ENCODE measurements at regions of chr3 and their contacts with region 1.

Region 1: GRCh38 chr3:158790901-158791589 is 10.8 kb upstream of the MFSD1 start:
- DNase-seq: peak in 14 of 35 experiments; percentile 0 to 76 (median 14)
- ATAC-seq: peak; percentile 58 to 69 (median 64)
- H3K4me3 ChIP-seq: no peak overlapping the region
- H3K4me3 Mint-ChIP-seq: peak overlapping the region; percentile 47 to 63 (median 47)
- H3K27ac ChIP-seq: no peak overlapping the region
- H3K27ac Mint-ChIP-seq: no peak overlapping the region
- H3K4me1 ChIP-seq: no peaks in the 10 kb centered on the region
- H3K4me1 Mint-ChIP-seq: peaks cover 3 to 6% (median 3%) of the 10 kb centered on the region in 3 donors
- H3K27me3 ChIP-seq: peaks cover 0 to 3% of the 10 kb centered on the region in 2 experiments
- H3K27me3 Mint-ChIP-seq: no peaks in the 10 kb centered on the region

Region 2: DNA sequence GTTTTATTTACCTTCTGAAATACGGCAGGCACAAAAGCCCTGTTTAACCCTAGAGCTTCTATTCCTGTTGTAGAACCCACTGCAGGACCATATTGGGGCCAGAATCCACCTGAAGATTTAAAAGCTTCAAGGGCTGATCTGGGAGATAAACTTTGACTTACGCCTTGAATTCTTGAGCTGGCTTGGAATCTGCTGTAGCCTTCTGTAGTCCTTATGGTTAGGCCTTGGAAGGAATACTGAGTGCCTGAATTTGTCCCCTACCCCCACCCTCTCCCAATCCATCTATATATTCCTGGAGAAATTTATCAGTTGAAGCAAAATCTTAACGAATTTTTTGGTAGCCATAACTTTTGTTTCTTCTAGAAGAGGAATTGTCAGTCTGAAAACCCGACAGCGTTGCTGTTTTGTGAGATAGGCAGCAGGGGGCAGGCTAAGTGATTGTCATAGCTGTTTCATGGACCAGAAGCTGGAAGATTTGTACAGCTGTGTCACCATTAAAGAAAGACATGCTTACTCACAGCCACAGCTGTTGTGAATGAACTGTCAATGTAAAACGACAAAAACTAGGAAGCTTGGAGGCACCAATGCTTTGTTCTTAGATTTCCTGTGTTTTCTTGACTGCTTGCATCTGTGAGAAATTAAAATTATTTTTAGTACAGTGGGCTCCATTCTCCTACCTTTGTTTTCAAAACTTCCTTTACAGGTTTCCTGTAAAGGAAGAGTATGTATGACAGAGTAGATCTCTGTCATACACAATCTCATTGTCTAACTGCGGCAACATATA is 131.4 kb before region 1 on chr3:
- CTCF ChIA-PET with region 1: interaction called, 10 to 30 read pairs
- POLR2A ChIA-PET with region 1: no interaction called
- DNase-seq: peak in 31 of 35 experiments; percentile 6 to 64 (median 35)
- ATAC-seq: peak; percentile 54 to 69 (median 68)
- H3K4me3 ChIP-seq: no peak overlapping the region
- H3K4me3 Mint-ChIP-seq: no peak overlapping the region
- H3K27ac ChIP-seq: no peak overlapping the region
- H3K27ac Mint-ChIP-seq: peak overlapping the region in 1 of 2 donors; percentile 28
- H3K4me1 ChIP-seq: no peaks in the 10 kb centered on the region
- H3K4me1 Mint-ChIP-seq: peaks cover 0 to 7% (median 5%) of the 10 kb centered on the region in 3 donors
- H3K27me3 ChIP-seq: no peaks in the 10 kb centered on the region
- H3K27me3 Mint-ChIP-seq: no peaks in the 10 kb centered on the region

Region 3: DNA sequence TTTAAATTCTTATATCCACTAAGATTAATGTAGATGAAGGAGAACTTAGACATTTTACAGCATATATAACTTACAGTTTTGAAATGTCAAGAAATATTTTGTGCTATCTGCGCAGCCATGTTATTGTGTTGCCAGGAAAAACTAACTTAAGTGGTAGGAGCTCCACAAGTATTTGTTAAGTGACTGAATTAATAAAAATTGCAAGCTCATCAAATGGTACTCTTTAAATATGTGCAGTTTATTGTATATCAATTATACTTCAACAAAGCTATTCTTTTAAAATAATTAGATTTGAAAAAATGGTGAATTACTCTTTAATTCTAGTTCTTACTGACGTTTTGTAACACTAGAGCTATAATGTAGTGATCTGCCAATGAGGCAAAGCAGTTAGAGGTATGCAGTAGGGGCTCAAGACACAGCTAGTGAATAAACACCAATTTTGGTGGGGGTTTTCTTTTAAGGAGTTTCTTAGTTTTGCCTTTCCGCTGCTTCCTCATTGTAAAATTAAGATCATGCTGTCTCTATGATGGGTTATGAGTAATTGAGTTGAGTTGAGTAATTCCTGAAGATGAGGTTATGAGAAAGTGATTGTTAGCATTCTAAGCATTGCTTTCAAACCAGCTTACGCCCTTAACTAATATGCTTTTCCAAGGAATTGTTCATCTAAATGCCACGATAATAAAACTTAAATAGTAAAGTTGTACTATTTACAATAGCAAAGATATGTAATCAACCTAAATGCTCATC is 107.7 kb before region 1 on chr3:
- CTCF ChIA-PET with region 1: interaction called in 1 of 2 experiments, 12 read pairs
- POLR2A ChIA-PET with region 1: no interaction called
- DNase-seq: no peak
- ATAC-seq: no peak
- H3K4me3 ChIP-seq: no peak overlapping the region
- H3K4me3 Mint-ChIP-seq: no peak overlapping the region
- H3K27ac ChIP-seq: no peak overlapping the region
- H3K27ac Mint-ChIP-seq: no peak overlapping the region
- H3K4me1 ChIP-seq: no peaks in the 10 kb centered on the region
- H3K4me1 Mint-ChIP-seq: no peaks in the 10 kb centered on the region
- H3K27me3 ChIP-seq: no peaks in the 10 kb centered on the region
- H3K27me3 Mint-ChIP-seq: no peaks in the 10 kb centered on the region

Region 4: GRCh38 chr3:158727206-158728060 is 63.6 kb before region 1 on chr3:
- CTCF ChIA-PET with region 1: interaction called, 5 to 47 read pairs
- POLR2A ChIA-PET with region 1: no interaction called
- DNase-seq: peak in 30 of 35 experiments; percentile 10 to 76 (median 34)
- ATAC-seq: peak; percentile 63 to 73 (median 70)
- H3K4me3 ChIP-seq: peak overlapping the region in 1 of 2 donors; percentile 8
- H3K4me3 Mint-ChIP-seq: peak overlapping the region; percentile 22 to 47 (median 41)
- H3K27ac ChIP-seq: no peak overlapping the region
- H3K27ac Mint-ChIP-seq: peak overlapping the region; percentile 55 to 68
- H3K4me1 ChIP-seq: peaks cover 5 to 25% of the 10 kb centered on the region in 2 experiments
- H3K4me1 Mint-ChIP-seq: peaks cover 39 to 57% (median 45%) of the 10 kb centered on the region in 3 donors
- H3K27me3 ChIP-seq: peaks cover 0 to 20% of the 10 kb centered on the region in 2 experiments
- H3K27me3 Mint-ChIP-seq: peaks cover 5 to 7% of the 10 kb centered on the region in 2 donors

Region 5: GRCh38 chr3:158742871-158743663 is 48.0 kb before region 1 on chr3:
- CTCF ChIA-PET with region 1: no interaction called
- POLR2A ChIA-PET with region 1: no interaction called
- DNase-seq: no peak
- ATAC-seq: no peak
- H3K4me3 ChIP-seq: no peak overlapping the region
- H3K4me3 Mint-ChIP-seq: no peak overlapping the region
- H3K27ac ChIP-seq: no peak overlapping the region
- H3K27ac Mint-ChIP-seq: no peak overlapping the region
- H3K4me1 ChIP-seq: no peaks in the 10 kb centered on the region
- H3K4me1 Mint-ChIP-seq: peaks cover 0 to 16% (median 13%) of the 10 kb centered on the region in 3 donors
- H3K27me3 ChIP-seq: no peaks in the 10 kb centered on the region
- H3K27me3 Mint-ChIP-seq: no peaks in the 10 kb centered on the region

Region 6: GRCh38 chr3:158753854-158754253 is 37.2 kb before region 1 on chr3:
- CTCF ChIA-PET with region 1: interaction called in 1 of 2 experiments, 11 read pairs
- POLR2A ChIA-PET with region 1: no interaction called
- DNase-seq: no peak
- ATAC-seq: no peak
- H3K4me3 ChIP-seq: no peak overlapping the region
- H3K4me3 Mint-ChIP-seq: no peak overlapping the region
- H3K27ac ChIP-seq: no peak overlapping the region
- H3K27ac Mint-ChIP-seq: no peak overlapping the region
- H3K4me1 ChIP-seq: no peaks in the 10 kb centered on the region
- H3K4me1 Mint-ChIP-seq: no peaks in the 10 kb centered on the region
- H3K27me3 ChIP-seq: no peaks in the 10 kb centered on the region
- H3K27me3 Mint-ChIP-seq: no peaks in the 10 kb centered on the region

Region 7: GRCh38 chr3:158801696-158802408 is 10.8 kb after region 1 on chr3 and contains the start of gene MFSD1:
- CTCF ChIA-PET with region 1: interaction called, 6 to 13 read pairs
- POLR2A ChIA-PET with region 1: no interaction called
- DNase-seq: peak; percentile 69 to 92 (median 80)
- ATAC-seq: peak; percentile 88 to 90 (median 90)
- H3K4me3 ChIP-seq: peak within 1 kb of the TSS; percentile 84 to 99
- H3K4me3 Mint-ChIP-seq: peak within 1 kb of the TSS; percentile 85 to 89 (median 89)
- H3K27ac ChIP-seq: peak within 1 kb of the TSS; percentile 76
- H3K27ac Mint-ChIP-seq: peak within 1 kb of the TSS; percentile 92 to 93
- H3K4me1 ChIP-seq: peaks cover 14 to 18% of the 10 kb centered on the region in 2 experiments
- H3K4me1 Mint-ChIP-seq: peaks cover 38 to 41% (median 40%) of the 10 kb centered on the region in 3 donors
- H3K27me3 ChIP-seq: no peaks in the 10 kb centered on the region
- H3K27me3 Mint-ChIP-seq: no peaks in the 10 kb centered on the region
- total RNA-seq, gene MFSD1: 17.7 to 28.3 (median 25.5) TPM

Measured in T-cell (primary cell).